Activated CD4-positive, alpha-beta T cell treated with anti-CD3 and anti-CD28 coated beads for 36 hours (primary cell): ENCODE measurements at regions of chr2 and their contacts with region 1.

Region 1: GRCh38 chr2:37871456-37872191 is 53.5 kb upstream of the RMDN2 start:
- DNase-seq: no peak
- ATAC-seq: peak; percentile 92
- H3K4me3 Mint-ChIP-seq: peak overlapping the region; percentile 49
- H3K27ac Mint-ChIP-seq: peak overlapping the region; percentile 93
- H3K4me1 Mint-ChIP-seq: peaks cover 37% of the 10 kb centered on the region
- H3K27me3 Mint-ChIP-seq: peaks cover 7% of the 10 kb centered on the region

Region 2: DNA sequence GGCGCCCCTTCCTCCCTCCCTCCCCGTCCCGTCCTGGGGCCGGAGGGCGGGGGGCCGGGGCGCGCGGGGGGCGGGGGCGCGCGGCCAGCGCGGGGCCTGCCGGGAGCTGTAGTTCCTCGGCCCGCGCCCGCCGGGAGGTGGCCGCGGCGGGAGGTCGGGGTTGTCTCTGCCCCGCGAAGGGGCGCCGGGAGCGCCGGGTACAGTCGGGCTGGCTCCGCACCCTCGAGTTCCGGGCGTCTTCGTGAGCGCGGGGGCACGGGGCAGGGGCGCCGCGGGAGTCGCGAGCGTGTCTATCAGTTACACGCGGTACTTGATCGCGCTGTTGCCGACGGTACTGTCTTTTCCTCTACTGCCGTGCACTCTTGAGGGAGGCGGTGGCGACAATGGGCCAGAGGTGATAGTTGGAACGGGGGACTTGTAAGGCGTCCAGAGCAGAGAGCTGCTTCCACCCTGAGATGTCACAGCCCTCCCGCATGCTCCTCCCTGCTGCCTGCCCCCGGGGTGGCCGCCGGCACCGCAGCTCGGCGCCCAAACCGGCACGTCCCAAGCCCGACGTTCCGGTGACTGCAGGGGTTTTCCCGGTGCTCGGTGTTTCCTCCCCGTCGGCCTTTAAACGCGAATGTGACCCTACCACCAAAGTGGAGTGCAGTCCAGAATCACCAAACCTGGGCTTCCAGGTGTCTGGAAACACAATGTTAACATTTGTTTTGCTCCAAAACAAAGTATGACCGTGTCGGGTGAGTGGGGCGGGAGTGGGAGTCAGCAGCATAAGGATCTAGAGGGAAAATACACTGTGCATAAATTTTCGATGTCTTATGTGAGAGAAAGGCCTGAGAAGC is 546.6 kb before region 1 on chr2 and contains the start of gene PRKD3:
- CTCF ChIA-PET with region 1: no interaction called
- POLR2A ChIA-PET with region 1: interaction called, 4 read pairs
- intact Hi-C with region 1: loop called in 1 of 2 experiments (anchors 2 kb)
- DNase-seq: peak; percentile 66
- ATAC-seq: peak; percentile 76
- H3K4me3 Mint-ChIP-seq: peak within 1 kb of the TSS; percentile 91
- H3K27ac Mint-ChIP-seq: peak within 1 kb of the TSS; percentile 92
- H3K4me1 Mint-ChIP-seq: peaks cover 27% of the 10 kb centered on the region
- H3K27me3 Mint-ChIP-seq: peaks cover 17% of the 10 kb centered on the region
- total RNA-seq, gene PRKD3: 17.4 to 22.8 TPM

Region 3: DNA sequence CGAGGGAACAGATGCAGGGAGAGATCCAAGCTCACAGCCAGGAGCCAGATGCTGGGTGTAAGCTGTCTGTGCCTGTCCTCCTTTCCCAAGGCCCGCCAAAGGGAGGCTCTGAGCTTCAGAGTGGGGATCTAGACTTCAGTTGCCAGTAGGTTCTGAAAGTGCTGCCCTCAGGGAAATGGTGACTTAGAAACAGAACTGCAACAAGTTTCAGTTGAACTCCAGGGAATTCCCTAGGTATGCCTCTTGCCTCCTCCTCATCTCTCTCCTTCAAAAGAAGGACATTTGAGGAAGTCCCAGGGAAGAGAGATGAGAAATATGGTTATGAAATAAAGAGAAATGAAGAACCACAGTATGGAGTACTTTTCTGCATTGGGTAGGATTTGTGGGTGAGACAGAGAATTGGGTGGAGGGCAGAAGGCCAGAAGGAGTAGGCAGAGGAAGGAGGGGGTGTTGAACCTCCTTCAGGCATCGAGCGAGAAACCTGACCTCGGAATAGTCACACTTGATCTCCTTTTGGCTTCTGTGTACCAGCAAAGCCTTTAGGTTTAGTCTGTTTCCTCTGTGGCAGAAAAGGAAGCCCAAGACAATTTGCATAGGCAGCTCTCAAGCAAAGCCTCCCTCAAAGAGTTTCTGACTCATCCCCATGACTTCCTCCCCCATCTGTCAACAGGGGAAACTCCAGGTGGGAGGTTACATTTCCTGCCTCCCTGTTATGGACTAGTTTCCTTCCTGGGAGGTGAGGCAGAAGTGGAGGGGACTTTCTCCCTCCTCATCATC is 481.4 kb before region 1 on chr2:
- CTCF ChIA-PET with region 1: interaction called, 143 read pairs
- POLR2A ChIA-PET with region 1: no interaction called
- intact Hi-C with region 1: loop called (anchors 1 kb)
- DNase-seq: peak; percentile 77
- ATAC-seq: peak; percentile 95
- H3K4me3 Mint-ChIP-seq: peak overlapping the region; percentile 30
- H3K27ac Mint-ChIP-seq: peak overlapping the region; percentile 75
- H3K4me1 Mint-ChIP-seq: no peaks in the 10 kb centered on the region
- H3K27me3 Mint-ChIP-seq: peaks cover 5% of the 10 kb centered on the region

Region 4: DNA sequence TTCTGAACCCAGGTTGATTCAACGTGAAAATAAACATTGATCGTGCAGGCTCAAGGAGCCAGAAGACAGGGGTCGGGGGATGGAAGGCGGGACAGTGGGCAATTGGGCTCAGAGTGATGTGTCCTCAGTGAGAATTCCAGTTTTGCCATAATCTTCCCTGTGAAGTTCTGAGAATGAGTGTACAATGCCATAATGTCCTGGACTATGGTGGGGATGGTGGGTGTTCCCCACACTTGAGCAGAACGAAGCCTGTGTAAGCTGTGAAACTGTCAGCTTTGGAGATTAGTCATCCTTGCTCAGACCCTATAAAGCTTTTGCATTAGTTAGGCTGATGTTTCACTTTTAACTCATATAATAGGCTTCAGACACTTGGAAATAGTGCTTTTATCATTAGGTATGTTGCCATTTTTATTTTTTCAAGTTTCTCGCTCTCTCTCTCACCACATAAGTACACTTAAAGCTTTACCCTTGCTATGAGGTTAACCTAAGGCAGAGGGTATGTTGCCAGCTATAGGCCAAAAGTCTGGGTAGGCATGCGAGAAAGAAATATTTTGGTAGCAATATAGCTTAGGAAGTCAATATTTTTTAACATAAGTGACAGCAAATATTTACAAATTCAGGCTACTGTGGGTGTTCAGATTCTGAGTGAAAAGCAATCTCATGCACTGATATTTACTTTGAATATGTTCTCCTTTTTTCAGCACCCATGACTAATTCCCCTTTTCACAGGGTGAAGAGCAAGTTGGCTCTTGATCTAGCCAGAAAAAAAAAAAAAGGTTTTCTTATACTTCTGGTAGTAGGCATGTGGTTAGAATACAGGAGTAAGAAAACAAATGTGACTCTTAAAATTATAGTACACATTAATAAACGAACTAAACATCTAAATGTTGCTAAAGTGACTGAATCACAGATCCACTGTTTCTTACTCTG is 247.4 kb before region 1 on chr2:
- CTCF ChIA-PET with region 1: no interaction called
- POLR2A ChIA-PET with region 1: no interaction called
- intact Hi-C with region 1: loop called in 1 of 2 experiments (anchors 5 kb)
- DNase-seq: peak; percentile 45
- ATAC-seq: peak; percentile 78
- H3K4me3 Mint-ChIP-seq: peak overlapping the region; percentile 48
- H3K27ac Mint-ChIP-seq: peak overlapping the region; percentile 85
- H3K4me1 Mint-ChIP-seq: peaks cover 76% of the 10 kb centered on the region
- H3K27me3 Mint-ChIP-seq: no peaks in the 10 kb centered on the region

Region 5: DNA sequence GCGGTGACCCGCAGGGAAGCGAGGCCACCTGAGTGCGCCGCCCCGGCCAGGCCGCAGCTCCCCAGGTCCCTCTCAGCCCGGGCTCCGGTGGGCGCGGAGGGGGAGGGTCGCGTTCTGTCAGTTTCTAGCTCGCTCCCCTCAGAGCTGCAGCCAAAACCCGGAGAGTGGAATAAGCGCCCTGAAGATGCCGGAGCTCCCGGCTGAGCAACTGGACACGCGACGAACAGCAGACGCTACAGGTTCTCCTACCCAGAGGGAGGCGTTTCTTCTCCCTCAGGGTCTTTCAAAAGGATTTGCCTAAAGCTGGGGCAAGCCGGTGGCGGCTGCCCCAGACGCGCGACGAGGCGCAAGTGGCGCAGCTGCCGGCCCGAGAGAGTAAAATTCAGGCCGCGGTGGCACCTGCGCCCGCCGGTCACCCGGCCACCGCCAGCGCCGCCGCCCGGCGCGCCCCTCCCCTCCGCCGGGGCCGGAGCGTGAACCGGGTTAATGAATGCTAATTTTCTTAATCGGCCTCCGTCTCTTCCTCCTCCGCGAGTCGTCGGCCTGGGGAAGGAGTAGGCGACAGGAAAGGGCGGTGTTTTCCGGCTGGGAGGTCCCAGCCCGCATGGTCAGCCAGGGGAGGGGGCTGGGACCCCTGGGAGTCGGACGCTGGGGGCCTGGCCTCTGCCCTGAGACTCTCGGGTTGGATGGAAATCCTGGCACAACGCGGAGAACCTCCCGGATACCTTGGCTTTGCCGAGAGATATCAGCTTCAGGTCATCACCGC is 199.3 kb before region 1 on chr2:
- CTCF ChIA-PET with region 1: no interaction called
- POLR2A ChIA-PET with region 1: no interaction called
- intact Hi-C with region 1: loop called in 1 of 2 experiments (anchors 5 kb)
- DNase-seq: peak; percentile 80
- ATAC-seq: peak; percentile 34
- H3K4me3 Mint-ChIP-seq: peak overlapping the region; percentile 83
- H3K27ac Mint-ChIP-seq: peak overlapping the region; percentile 83
- H3K4me1 Mint-ChIP-seq: peaks cover 40% of the 10 kb centered on the region
- H3K27me3 Mint-ChIP-seq: no peaks in the 10 kb centered on the region

Region 6: GRCh38 chr2:37851828-37852584 is 19.6 kb before region 1 on chr2:
- CTCF ChIA-PET with region 1: interaction called, 16 read pairs
- POLR2A ChIA-PET with region 1: no interaction called
- intact Hi-C with region 1: loop called (anchors 1 kb)
- DNase-seq: no peak
- ATAC-seq: peak; percentile 93
- H3K4me3 Mint-ChIP-seq: no peak overlapping the region
- H3K27ac Mint-ChIP-seq: peak overlapping the region; percentile 84
- H3K4me1 Mint-ChIP-seq: peaks cover 23% of the 10 kb centered on the region
- H3K27me3 Mint-ChIP-seq: no peaks in the 10 kb centered on the region